Activated CD4-positive, alpha-beta T cell treated with anti-CD3 and anti-CD28 coated beads for 36 hours (primary cell): ENCODE measurements at regions of chr1 and their contacts with region 1.

Region 1: DNA sequence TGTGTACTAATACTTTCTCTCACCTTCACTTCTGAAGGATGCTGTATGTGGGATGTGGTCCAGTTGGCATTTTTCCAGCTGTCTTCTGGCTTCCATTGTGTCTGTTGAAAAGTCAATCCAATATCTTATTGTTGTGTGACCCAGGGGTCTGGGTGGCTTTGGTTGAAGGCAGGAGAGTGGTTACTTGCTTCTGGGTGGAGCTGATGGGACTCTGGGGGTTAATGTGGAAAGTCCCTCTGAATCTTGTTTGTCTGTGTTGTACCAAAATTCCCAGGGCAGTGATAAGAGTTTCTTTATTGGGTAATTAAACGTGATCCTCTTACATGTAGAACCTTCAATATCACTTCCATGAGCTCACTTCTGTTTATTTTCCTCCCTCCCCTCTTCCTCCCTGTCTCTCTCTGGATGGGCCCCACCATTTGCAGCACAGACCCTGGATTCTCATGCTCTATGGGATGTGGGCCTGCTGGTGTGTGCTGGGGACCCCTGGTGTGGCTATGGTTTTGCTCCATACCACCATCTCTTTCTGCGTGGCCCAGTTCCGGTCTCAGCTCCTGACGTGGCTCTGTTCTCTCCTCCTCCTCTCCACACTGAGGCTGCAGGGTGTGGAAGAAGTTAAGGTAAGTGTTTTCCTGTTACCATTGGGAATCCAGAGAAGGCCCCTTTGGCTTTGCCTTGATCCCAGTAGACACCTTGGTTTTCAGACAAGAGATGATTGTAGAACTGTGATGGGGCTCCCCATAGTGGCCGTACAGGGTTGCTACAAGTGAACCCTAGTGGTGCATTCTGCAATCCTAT is 71.5 kb downstream of the HHAT start:
- DNase-seq: peak; percentile 76
- ATAC-seq: peak; percentile 79
- H3K4me3 Mint-ChIP-seq: no peak overlapping the region
- H3K27ac Mint-ChIP-seq: peak overlapping the region; percentile 94
- H3K4me1 Mint-ChIP-seq: peaks cover 44% of the 10 kb centered on the region
- H3K27me3 Mint-ChIP-seq: peaks cover 8% of the 10 kb centered on the region

Region 2: DNA sequence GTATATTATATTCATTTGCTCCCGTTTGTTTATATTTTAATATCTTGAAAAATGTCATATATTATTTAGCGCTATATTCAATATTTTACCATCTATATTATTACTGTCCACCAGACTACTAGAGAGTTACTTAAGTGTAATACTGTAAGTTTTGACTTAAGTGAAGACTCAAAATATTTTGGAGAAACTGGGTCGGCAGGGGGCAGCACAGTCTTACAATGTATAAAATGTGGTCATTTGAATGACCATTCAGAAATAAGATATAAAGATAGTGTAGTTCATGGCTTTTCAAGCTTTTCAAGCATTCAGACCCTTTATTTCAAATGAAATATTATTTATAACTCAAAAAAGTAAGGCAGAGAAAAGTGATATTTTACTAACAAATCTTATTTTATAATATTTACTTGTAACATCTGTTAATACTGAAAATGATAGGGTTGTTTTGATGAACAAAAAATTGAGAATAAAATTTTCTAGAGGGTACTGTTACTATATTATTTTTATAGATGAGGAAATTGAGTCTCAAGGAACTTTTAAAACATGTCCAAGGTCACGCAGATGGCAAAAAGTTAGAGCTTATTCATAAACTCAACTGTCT is 256.7 kb before region 1 on chr1:
- CTCF ChIA-PET with region 1: interaction called, 4 read pairs
- POLR2A ChIA-PET with region 1: no interaction called
- intact Hi-C with region 1: loop called (anchors 1 kb)
- DNase-seq: peak; percentile 80
- ATAC-seq: no peak
- H3K4me3 Mint-ChIP-seq: no peak overlapping the region
- H3K27ac Mint-ChIP-seq: no peak overlapping the region
- H3K4me1 Mint-ChIP-seq: no peaks in the 10 kb centered on the region
- H3K27me3 Mint-ChIP-seq: peaks cover 27% of the 10 kb centered on the region

Region 3: DNA sequence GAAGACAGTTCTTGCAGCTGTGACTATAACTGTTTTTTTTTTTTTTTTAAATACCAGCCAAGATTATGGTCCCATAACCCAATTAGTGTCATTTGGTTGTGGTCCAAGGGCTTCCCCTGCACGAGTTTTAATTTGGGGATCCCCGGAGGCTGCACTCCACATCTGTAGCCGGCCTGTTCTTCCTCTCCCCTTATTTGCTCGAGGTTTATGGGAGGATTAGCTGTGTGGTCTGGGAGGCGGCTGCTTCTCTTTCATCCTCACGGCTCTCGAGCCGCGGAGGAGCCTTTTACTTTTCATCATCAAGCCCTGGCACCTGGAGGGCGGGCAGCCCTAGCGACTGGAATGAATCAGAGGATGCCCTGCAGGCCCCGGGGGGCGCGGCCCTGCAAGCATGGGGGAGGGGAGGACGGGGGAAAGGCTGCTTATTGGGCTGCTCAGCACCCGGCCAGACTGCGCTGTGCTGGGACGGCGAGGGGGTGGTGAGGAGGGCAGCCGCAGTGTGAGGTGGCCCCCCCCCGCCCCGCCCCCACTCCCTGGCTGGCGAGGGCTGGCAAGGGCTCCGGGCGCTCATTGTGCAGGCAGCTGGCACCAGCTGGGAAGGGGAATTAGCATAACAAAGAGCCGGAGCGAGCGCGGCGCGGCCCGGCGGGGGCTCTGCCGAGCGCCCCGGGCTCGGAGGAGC is 149.1 kb before region 1 on chr1:
- CTCF ChIA-PET with region 1: no interaction called
- POLR2A ChIA-PET with region 1: no interaction called
- intact Hi-C with region 1: loop called in 1 of 2 experiments (anchors 5 kb)
- DNase-seq: peak; percentile 61
- ATAC-seq: peak; percentile 47
- H3K4me3 Mint-ChIP-seq: peak overlapping the region; percentile 43
- H3K27ac Mint-ChIP-seq: no peak overlapping the region
- H3K4me1 Mint-ChIP-seq: peaks cover 29% of the 10 kb centered on the region
- H3K27me3 Mint-ChIP-seq: peaks cover 60% of the 10 kb centered on the region

Region 4: DNA sequence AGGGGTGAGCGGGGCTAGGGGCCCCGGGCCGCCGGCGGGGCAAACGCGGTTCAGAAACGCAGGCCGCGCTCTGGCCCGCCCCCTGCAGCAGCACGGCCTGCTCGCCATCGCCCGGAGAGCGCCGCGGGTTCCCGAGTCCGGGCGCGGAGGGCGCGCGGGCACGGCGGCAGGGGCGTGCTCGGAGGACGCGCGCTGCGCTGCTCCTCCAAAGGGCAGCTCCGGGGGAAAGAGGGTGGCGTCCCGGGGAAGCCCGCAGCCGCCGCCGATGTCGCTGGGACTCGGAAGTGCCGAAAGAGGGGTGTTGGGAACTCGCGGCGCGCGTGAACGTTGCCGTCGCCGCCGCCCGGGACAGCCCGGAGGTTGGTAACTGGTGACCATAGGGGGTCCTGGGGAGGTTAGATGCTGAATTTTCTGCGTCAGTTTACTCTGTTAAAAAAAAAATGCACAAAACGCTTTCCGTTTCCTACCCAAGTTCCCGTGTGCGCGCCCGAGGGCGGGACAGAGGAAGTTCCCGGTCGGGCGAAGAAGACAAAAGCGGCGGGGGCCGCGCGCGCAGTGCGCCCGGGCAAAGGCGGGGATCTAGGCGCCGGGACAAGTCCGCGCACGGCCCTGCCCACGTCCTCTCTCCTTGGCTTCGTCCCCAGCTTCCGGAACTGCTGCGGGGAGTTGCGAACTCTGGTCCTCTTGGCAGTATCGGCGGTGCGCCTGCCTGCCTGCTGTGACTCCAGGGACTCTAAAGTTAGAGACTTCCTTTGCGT is 71.3 kb before region 1 on chr1 and contains the start of gene HHAT:
- CTCF ChIA-PET with region 1: interaction called, 11 read pairs
- POLR2A ChIA-PET with region 1: interaction called, 11 read pairs
- intact Hi-C with region 1: loop called (anchors 1 kb)
- DNase-seq: peak; percentile 80
- ATAC-seq: peak; percentile 34
- H3K4me3 Mint-ChIP-seq: peak within 1 kb of the TSS; percentile 82
- H3K27ac Mint-ChIP-seq: peak within 1 kb of the TSS; percentile 95
- H3K4me1 Mint-ChIP-seq: peaks cover 36% of the 10 kb centered on the region
- H3K27me3 Mint-ChIP-seq: peaks cover 3% of the 10 kb centered on the region
- total RNA-seq, gene HHAT: 0.82 to 0.84 TPM

Region 5: GRCh38 chr1:210360852-210361477 is 39.3 kb before region 1 on chr1:
- CTCF ChIA-PET with region 1: interaction called, 11 read pairs
- POLR2A ChIA-PET with region 1: no interaction called
- intact Hi-C with region 1: loop called (anchors 1 to 5 kb)
- DNase-seq: no peak
- ATAC-seq: peak; percentile 68
- H3K4me3 Mint-ChIP-seq: no peak overlapping the region
- H3K27ac Mint-ChIP-seq: no peak overlapping the region
- H3K4me1 Mint-ChIP-seq: peaks cover 7% of the 10 kb centered on the region
- H3K27me3 Mint-ChIP-seq: no peaks in the 10 kb centered on the region

Region 6: DNA sequence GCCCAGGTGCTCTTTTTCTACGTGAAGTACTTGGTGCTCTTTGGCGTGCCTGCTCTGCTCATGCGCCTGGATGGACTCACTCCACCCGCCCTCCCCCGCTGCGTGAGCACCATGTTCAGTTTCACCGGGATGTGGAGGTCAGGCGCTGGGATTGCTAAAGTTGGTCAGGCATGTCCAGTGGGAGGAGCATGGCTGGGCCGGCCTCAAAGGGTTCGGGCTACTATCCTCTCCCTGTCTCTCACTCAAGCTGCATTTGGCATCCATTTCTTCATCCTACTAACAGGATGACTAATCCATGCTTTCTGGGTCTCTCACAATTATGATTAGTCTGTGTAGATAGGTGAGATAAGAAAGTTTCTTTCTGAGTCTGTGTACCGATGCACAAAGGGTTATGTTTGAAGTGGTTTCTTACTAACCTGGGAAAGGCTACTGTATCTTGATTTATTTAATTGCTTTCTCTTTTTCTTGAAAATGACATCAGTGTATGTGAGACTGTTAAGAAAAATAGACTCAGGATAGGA is 64.3 kb after region 1 on chr1:
- CTCF ChIA-PET with region 1: interaction called, 3 read pairs
- POLR2A ChIA-PET with region 1: no interaction called
- intact Hi-C with region 1: loop called in 1 of 2 experiments (anchors 2 kb)
- DNase-seq: peak; percentile 45
- ATAC-seq: peak; percentile 92
- H3K4me3 Mint-ChIP-seq: no peak overlapping the region
- H3K27ac Mint-ChIP-seq: peak overlapping the region; percentile 37
- H3K4me1 Mint-ChIP-seq: peaks cover 24% of the 10 kb centered on the region
- H3K27me3 Mint-ChIP-seq: no peaks in the 10 kb centered on the region

Region 7: GRCh38 chr1:210516696-210517459 is 116.6 kb after region 1 on chr1:
- CTCF ChIA-PET with region 1: no interaction called
- POLR2A ChIA-PET with region 1: no interaction called
- intact Hi-C with region 1: no loop called
- DNase-seq: no peak
- ATAC-seq: no peak
- H3K4me3 Mint-ChIP-seq: no peak overlapping the region
- H3K27ac Mint-ChIP-seq: no peak overlapping the region
- H3K4me1 Mint-ChIP-seq: no peaks in the 10 kb centered on the region
- H3K27me3 Mint-ChIP-seq: no peaks in the 10 kb centered on the region